ENCODE measurements at regions of chr22 and their contacts with region 1.

Region 1: DNA sequence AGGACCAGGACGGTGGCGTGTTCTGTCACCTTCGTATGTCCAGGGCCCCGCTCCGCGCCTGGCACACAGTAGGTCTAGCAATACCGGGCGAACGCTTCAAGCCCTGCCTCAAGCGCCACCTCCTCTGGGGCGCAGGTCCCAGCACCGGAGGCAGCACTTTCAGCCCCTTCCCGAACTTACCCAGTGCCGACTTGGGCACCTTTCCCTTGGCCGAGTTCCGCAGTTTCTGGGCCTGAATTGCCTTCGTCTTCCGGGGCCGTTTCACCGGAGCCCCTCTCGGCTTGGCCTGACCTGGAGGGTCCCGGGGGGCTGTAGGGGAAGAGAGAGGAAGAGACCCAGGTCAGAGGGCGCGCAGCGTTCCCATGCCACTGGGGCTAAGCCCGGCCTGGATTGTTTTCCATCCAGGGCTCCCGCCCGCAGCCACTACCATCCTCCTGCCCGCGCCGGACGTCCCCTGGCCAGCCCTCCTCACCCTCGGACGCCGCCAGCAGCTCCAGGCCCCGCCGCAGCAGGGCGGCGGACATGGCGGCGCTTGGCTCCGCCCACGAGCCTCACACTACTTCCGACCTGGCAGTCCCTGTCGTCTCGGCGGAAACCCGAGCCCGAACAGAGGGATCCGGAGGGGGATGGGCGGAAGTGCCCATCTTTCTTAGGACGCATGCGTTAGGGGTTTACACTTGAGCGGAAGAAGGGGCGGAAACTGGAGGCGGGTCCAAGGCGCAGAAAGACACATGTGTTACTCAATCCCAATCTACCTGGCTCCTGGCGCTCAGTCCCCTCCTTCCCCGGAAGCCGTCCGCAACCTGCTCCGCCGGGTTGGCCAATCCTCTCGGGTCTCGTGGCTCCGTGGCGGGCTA is at the start of gene RPS19BP1:
- DNase-seq: peak; percentile 100
- H3K4me3 ChIP-seq: peak within 1 kb of the TSS; percentile 87
- H3K27ac ChIP-seq: peak within 1 kb of the TSS; percentile 30
- H3K4me1 ChIP-seq: peaks cover 44% of the 10 kb centered on the region
- H3K27me3 ChIP-seq: no peaks in the 10 kb centered on the region
- CTCF ChIP-seq: peak; percentile 24; the same call in 1 of the 2 replicates
- total RNA-seq, gene RPS19BP1: 60.7 and 94.3 TPM in 2 replicates

Region 2: GRCh38 chr22:38656256-38657044 is 876.0 kb before region 1 on chr22 and contains the starts of genes CBY1 and FAM227A:
- CTCF ChIA-PET with region 1: no interaction called
- POLR2A ChIA-PET with region 1: interaction called, 12 read pairs
- intact Hi-C with region 1: no loop called
- DNase-seq: peak; percentile 84 to 94
- H3K4me3 ChIP-seq: peak within 1 kb of the TSS; percentile 80
- H3K27ac ChIP-seq: peak within 1 kb of the TSS; percentile 49
- H3K4me1 ChIP-seq: peaks cover 13% of the 10 kb centered on the region; the same call in 1 of the 2 replicates
- H3K27me3 ChIP-seq: no peaks in the 10 kb centered on the region
- CTCF ChIP-seq: no peak
- total RNA-seq, gene CBY1: 58.9 and 61.8 TPM in 2 replicates
- total RNA-seq, gene FAM227A: 8.8 and 9.8 TPM in 2 replicates

Region 3: DNA sequence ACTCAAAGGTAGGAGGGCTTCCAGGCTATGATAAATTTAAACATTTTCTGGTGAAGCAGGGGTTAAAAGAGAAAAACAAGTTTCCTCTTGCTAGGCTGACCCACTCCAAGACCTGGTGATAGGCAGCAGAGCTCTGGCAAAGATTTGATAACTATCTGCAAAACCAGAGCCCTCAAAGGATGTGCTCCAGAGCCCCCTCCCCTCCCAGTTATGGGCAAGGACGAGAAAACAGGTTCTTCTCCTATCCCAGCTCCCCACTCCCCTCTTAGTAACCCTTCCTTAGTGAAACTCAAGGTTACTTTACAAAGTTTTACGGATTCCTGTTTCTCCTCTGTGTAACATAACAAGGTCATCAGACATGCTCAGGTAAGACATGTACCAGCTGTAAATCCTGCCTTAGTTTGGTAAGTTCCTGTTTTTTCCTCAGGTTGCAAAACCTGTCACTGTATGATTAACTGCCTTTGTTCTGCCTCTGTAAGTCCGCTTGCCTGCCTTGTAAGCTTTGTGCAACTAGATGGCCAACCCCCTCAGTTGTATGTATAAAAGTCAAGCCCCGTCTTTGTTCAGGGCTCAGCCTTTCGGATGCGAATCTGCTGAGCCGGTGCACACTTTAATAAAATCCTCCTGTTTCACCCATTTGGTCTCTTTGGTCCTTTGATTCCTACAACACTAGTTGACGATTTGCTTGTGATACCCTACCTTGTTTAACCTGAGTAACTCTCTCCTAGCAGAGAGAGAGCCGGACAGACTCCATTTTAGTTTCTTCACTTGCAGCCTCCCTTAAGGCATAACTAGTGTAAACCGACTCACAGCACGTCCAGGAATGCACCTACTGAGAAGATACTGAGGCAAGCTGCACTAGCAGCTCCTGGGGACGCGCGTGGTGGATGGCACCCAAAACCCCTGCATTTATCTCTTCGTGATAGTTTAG is 421.5 kb before region 1 on chr22:
- CTCF ChIA-PET with region 1: no interaction called
- POLR2A ChIA-PET with region 1: no interaction called
- intact Hi-C with region 1: no loop called
- DNase-seq: peak; percentile 34 to 92
- H3K4me3 ChIP-seq: no peak overlapping the region
- H3K27ac ChIP-seq: peak overlapping the region; percentile 47
- H3K4me1 ChIP-seq: peaks cover 21% of the 10 kb centered on the region
- H3K27me3 ChIP-seq: no peaks in the 10 kb centered on the region
- CTCF ChIP-seq: no peak

Region 4: GRCh38 chr22:39496131-39496838 is 36.2 kb before region 1 on chr22:
- CTCF ChIA-PET with region 1: interaction called, 8 read pairs
- POLR2A ChIA-PET with region 1: interaction called, 3 read pairs
- intact Hi-C with region 1: loop called (anchors 1 kb)
- DNase-seq: peak; percentile 39 to 59
- H3K4me3 ChIP-seq: no peak overlapping the region
- H3K27ac ChIP-seq: no peak overlapping the region
- H3K4me1 ChIP-seq: peaks cover 9% of the 10 kb centered on the region
- H3K27me3 ChIP-seq: no peaks in the 10 kb centered on the region
- CTCF ChIP-seq: peak; percentile 87

Region 5: DNA sequence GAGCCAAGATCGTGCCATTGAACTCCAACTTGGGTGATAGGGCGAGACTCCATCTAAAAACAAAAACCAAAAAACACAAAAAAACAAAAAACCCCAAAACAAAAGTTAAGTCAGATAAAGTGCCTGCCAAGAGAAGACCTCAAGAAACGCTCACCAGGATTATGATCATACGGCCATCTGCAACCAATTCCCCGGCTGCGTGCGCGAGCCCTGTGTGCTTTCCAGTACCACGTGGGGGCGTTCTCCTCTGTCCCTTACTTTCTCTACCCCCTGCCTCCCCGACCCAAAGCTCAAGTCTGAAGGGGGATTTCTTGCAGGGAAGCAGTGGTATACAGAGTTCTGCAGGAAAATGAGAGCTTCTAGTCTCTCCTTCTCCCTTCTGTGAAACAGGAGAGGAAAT is 10.7 kb after region 1 on chr22:
- CTCF ChIA-PET with region 1: interaction called, 14 read pairs
- POLR2A ChIA-PET with region 1: no interaction called
- intact Hi-C with region 1: no loop called
- DNase-seq: peak in 1 of 2 experiments; percentile 28
- H3K4me3 ChIP-seq: no peak overlapping the region
- H3K27ac ChIP-seq: no peak overlapping the region
- H3K4me1 ChIP-seq: no peaks in the 10 kb centered on the region
- H3K27me3 ChIP-seq: peaks cover 14% of the 10 kb centered on the region
- CTCF ChIP-seq: peak; percentile 38; the same call in 1 of the 2 replicates

Region 6: GRCh38 chr22:40036591-40037225 is 504.3 kb after region 1 on chr22:
- CTCF ChIA-PET with region 1: interaction called, 11 read pairs
- POLR2A ChIA-PET with region 1: no interaction called
- intact Hi-C with region 1: loop called (anchors 1 kb)
- DNase-seq: peak; percentile 65 to 73
- H3K4me3 ChIP-seq: no peak overlapping the region
- H3K27ac ChIP-seq: no peak overlapping the region
- H3K4me1 ChIP-seq: peaks cover 14% of the 10 kb centered on the region
- H3K27me3 ChIP-seq: no peaks in the 10 kb centered on the region; the same call in 1 of the 2 replicates
- CTCF ChIP-seq: peak; percentile 94